Astrocyte of the cerebellum (primary cell): ENCODE measurements at regions of chr4 and their contacts with region 1.

Region 1: GRCh38 chr4:163535657-163536056 is 41.2 kb downstream of the TMA16 start:
- DNase-seq: no peak
- H3K4me3 ChIP-seq: no peak overlapping the region
- CTCF ChIP-seq: peak; percentile 36

Region 2: GRCh38 chr4:163500586-163500985 is 35.1 kb before region 1 on chr4:
- in situ Hi-C with region 1: loop called (anchors 5 kb)
- DNase-seq: no peak
- H3K4me3 ChIP-seq: no peak overlapping the region
- CTCF ChIP-seq: no peak

Region 3: GRCh38 chr4:163587867-163588266 is 52.2 kb after region 1 on chr4:
- in situ Hi-C with region 1: no loop called
- DNase-seq: no peak
- H3K4me3 ChIP-seq: no peak overlapping the region
- CTCF ChIP-seq: peak; percentile 17